MCF 10A (cell line): ENCODE measurements at regions of chr6 and their contacts with region 1.

Region 1: GRCh38 chr6:32658268-32658897 is 8.1 kb downstream of the HLA-DQB1 start:
- DNase-seq: no peak
- H3K4me3 Mint-ChIP-seq: no peak overlapping the region
- H3K27ac Mint-ChIP-seq: no peak overlapping the region
- H3K4me1 Mint-ChIP-seq: no peaks in the 10 kb centered on the region
- H3K27me3 Mint-ChIP-seq: peaks cover 43% of the 10 kb centered on the region
- CTCF ChIP-seq: no peak

Region 2: DNA sequence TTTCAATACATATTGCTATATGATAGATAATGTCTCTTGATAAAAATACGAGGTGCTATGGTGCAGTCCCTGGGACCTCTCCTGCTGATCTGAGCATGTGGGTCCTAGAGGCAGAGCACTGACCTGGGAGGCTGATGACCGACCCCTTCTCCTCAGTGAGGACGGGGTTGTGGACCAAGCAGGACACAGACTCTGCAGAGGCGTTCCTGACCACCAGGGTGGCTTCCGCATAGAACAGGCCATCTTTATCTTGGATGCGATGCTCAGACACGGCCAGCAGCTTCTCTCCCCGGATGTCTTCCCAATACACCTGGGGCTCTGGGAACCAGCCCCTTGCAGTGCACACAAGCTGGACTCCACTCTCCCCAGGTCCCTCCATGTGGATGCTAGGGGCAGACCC is 255.6 kb before region 1 on chr6:
- CTCF ChIA-PET with region 1: no interaction called
- POLR2A ChIA-PET with region 1: no interaction called
- intact Hi-C with region 1: no loop called
- DNase-seq: no peak
- H3K4me3 Mint-ChIP-seq: no peak overlapping the region
- H3K27ac Mint-ChIP-seq: no peak overlapping the region
- H3K4me1 Mint-ChIP-seq: no peaks in the 10 kb centered on the region
- H3K27me3 Mint-ChIP-seq: peaks cover 97% of the 10 kb centered on the region
- CTCF ChIP-seq: no peak

Region 3: DNA sequence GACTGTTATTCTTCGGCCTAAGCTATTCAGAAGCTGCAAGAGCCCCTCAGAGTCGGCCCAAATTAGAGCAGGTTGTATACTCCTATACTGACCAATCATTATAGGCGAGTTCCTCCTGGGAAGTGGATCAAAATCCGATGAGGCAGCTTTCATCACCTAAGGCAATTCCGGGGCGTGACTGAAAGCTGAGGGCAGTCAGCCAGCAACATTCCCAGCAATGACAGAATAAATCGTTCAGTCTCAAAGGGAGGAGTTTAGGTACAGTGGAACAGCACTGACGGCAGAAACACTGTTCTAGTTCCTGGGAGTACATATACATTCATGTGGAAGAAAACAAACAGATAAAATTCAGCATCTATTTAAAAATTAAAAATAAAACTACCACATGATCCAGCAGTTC is 94.2 kb after region 1 on chr6:
- CTCF ChIA-PET with region 1: no interaction called
- POLR2A ChIA-PET with region 1: no interaction called
- intact Hi-C with region 1: loop called (anchors 5 kb)
- DNase-seq: peak; percentile 12
- H3K4me3 Mint-ChIP-seq: no peak overlapping the region
- H3K27ac Mint-ChIP-seq: no peak overlapping the region
- H3K4me1 Mint-ChIP-seq: no peaks in the 10 kb centered on the region
- H3K27me3 Mint-ChIP-seq: peaks cover 97% of the 10 kb centered on the region
- CTCF ChIP-seq: no peak